ENCODE measurements at regions of chr10 and their contacts with region 1.

Region 1: GRCh38 chr10:92592761-92593618 is at the start of gene KIF11:
- DNase-seq: peak; percentile 96
- ATAC-seq: peak; percentile 82
- H3K4me3 Mint-ChIP-seq: peak within 1 kb of the TSS; percentile 97
- H3K27ac Mint-ChIP-seq: peak within 1 kb of the TSS; percentile 99
- H3K4me1 Mint-ChIP-seq: peaks cover 37% of the 10 kb centered on the region
- H3K27me3 Mint-ChIP-seq: no peaks in the 10 kb centered on the region
- total RNA-seq, gene KIF11: 53.7 to 55.2 TPM

Region 2: DNA sequence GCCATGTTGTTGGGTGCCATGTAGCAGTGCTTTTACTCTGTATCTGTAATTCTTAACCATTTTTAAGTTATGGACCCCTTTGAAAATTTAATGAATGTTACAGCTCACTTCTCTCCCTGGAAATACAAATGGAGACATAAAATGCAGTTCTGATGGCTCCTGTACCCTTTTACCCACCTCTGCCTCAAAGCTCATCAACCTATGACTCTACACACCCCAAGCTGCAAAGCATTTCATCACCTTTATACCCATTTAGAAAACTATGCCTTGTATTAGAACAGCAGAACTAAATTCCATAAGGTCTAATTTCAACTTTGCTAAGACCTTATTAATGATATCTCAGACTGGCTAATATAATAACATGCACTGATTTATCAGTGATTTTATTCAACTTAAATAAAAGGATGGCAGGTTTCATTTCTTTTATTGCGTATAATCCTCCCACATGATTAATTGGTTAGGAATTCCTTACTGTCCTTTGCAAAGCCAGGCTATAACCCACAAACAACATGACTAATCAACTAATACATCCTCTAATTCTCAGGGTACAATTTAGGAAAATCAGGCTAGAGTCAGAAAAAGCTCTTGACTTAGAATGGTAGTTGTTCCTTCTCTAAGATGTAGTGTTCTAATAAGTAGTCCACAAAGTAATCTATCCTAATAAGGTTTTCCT is 370.3 kb before region 1 on chr10:
- POLR2A ChIA-PET with region 1: no interaction called
- DNase-seq: no peak
- ATAC-seq: no peak
- H3K4me3 Mint-ChIP-seq: no peak overlapping the region
- H3K27ac Mint-ChIP-seq: no peak overlapping the region
- H3K4me1 Mint-ChIP-seq: no peaks in the 10 kb centered on the region
- H3K27me3 Mint-ChIP-seq: no peaks in the 10 kb centered on the region

Region 3: DNA sequence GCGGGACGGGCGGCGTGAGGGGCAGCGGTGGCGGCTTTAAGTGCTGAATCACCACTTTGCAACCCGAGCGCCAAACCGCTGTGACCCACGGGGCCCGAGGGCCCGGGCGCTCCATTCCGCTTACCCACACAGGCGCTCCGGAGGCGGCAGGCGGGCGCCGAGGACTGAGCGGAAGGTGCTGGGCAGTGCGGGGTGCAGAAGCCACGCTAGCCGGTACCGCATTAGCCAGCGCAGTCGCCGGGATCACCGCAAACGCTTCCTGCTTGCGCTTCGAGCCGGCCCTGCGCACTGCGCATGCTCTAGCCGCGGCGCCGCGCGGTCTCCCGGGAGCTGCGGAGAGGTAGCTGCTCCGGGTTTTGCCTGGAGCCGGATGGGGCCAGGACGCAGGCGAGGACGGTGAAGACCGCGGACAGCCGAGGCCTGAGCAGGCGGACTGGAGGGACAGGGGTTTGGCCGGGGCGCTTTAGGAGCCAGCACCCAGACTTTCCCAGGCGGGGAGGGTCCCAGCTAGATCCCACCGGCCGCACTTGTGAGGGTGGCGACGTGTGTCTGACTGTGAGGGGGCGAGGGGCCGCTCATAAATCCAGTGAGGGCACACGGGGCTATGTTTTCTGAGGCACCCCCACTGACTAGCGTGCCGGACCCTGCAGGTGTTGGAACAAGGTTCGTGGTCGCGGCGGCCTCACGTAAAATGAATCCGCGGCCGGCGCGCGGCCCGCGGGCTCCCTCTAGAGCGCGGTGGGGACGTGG is 19.0 kb before region 1 on chr10 and contains the start of gene IDE:
- POLR2A ChIA-PET with region 1: interaction called, 35 read pairs
- DNase-seq: peak; percentile 89
- ATAC-seq: peak; percentile 83
- H3K4me3 Mint-ChIP-seq: peak within 1 kb of the TSS; percentile 60
- H3K27ac Mint-ChIP-seq: peak within 1 kb of the TSS; percentile 84
- H3K4me1 Mint-ChIP-seq: peaks cover 17% of the 10 kb centered on the region
- H3K27me3 Mint-ChIP-seq: peaks cover 2% of the 10 kb centered on the region
- total RNA-seq, gene IDE: 17.9 to 18.2 TPM

Region 4: GRCh38 chr10:92656291-92656961 is 63.4 kb after region 1 on chr10:
- POLR2A ChIA-PET with region 1: no interaction called
- DNase-seq: no peak
- ATAC-seq: peak; percentile 26
- H3K4me3 Mint-ChIP-seq: no peak overlapping the region
- H3K27ac Mint-ChIP-seq: no peak overlapping the region
- H3K4me1 Mint-ChIP-seq: no peaks in the 10 kb centered on the region
- H3K27me3 Mint-ChIP-seq: peaks cover 4% of the 10 kb centered on the region

Region 5: GRCh38 chr10:92848441-92849233 is 255.6 kb after region 1 on chr10 and contains the start of gene EXOC6:
- POLR2A ChIA-PET with region 1: interaction called, 13 read pairs
- DNase-seq: peak; percentile 91
- ATAC-seq: peak; percentile 87
- H3K4me3 Mint-ChIP-seq: peak within 1 kb of the TSS; percentile 90
- H3K27ac Mint-ChIP-seq: peak within 1 kb of the TSS; percentile 95
- H3K4me1 Mint-ChIP-seq: peaks cover 28% of the 10 kb centered on the region
- H3K27me3 Mint-ChIP-seq: no peaks in the 10 kb centered on the region
- total RNA-seq, gene EXOC6: 10.4 to 10.6 TPM

Measured in activated naive CD8-positive, alpha-beta T cell treated with anti-CD3 and anti-CD28 coated beads, Interleukin-2, amount 10 ng/mL, durations not matched to agents 7 days and 5 days (primary cell).